ENCODE measurements at regions of chr1 and their contacts with region 1.

Region 1: DNA sequence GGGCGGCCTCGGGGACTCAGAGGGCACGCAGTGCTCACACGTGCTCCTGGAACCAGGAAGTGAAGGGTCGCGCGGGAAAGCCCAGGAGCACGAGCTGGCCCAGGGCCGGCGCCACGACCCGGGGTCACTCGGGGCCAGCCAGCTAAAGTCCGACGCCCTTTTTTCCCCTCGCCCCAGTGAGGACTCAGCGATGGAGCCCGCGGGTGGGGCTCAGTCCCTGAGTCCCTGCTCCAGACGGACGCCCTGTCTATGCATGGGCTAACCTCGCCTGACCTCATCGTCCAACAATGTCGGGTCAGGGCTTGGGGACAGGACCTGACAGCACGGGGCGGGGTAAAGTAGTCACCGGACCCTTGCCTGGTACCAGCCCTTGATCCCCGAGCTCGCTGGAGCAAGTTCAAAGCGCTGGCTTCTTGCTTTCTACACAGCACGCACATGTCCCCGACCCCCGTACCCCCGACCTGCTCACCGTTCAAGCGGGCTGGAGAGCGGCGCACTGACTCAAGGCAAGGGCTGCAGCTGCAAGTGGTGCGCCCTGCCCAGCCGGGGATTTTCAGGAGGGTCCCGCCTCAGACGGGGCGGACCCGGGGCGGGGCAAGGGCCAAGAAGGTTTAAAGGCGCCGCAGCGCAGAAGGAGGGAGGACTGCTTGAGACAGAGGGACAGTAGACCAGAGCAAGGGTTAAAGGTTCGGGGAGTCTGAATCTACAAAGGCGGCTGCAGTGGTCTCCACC is at the start of gene TAGLN2:
- DNase-seq: peak; percentile 91

Region 2: GRCh38 chr1:159936273-159936904 is 11.2 kb after region 1 on chr1:
- CTCF ChIA-PET with region 1: no interaction called
- POLR2A ChIA-PET with region 1: interaction called, 14 read pairs
- DNase-seq: peak; percentile 89